ENCODE measurements at regions of chr10 and their contacts with region 1.

Region 1: DNA sequence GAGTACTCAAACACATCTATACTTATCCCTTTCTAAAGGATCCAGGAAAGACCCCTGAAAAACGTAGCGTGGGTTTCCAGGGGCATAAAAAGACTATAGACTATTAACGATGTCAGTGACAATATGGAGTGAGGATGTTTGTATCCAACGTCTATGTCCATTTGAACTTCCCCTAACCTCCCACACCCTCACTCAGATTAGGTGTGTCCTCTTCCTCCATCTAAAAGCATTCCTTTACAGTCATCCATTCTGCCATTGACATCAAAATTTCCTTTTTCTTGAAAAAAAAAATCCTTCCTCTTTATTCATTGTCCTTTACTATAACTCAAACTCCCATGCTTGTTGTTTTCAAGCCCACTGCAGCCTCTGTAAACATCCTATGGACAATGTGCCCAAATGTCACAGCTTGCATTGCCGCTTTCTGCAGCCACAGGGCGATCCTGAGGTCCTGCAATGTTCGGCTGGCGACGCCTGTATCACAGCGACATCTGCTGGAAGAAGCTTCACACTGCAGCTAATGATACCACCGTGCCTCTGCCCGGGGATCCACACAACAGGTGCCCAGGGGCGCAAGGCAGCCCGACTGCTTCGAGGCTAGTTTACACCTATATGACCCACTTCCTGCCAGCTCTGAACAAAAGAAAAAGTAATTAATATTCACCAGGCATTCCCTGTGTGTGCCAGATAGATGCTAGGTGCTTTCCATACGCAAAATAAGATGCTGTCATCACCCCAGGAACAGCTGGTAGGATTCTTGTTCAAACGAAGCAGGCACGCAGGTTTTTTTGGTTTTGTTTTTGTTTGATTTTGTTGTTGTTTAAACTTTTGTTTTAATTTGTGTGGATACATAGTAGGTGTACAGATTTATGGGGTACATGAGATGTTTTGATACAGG is 267.9 kb upstream of the GHITM start:
- DNase-seq: peak; percentile 55 to 62
- ATAC-seq: peak; percentile 80 to 93 (median 88)
- H3K4me3 ChIP-seq: no peak overlapping the region
- H3K27ac ChIP-seq: no peak overlapping the region
- H3K4me1 ChIP-seq: peaks cover 0 to 13% (median 6%) of the 10 kb centered on the region in 9 donors
- H3K27me3 ChIP-seq: no peaks in the 10 kb centered on the region
- CTCF ChIP-seq: peak; percentile 89 to 99 (median 97)

Region 2: DNA sequence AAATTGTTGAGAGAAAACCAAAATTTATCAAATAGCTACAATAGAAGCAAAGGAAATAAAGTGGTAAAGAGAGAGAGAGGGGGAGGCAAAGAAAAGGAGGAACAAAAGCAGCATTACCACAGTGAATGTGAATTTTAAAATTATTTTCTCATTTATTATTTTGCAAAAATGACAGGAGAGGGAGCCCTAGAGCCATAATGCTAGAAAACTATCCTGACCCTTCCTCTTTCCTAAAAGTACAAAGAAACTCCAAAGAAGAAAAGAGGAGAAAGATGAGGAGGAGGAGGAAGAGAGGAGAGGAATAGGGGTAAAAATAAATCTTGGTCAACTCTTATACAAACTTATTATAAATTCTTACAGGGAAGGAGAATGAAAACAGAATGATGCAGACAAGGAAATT is 1074.9 kb before region 1 on chr10:
- intact Hi-C with region 1: loop called in 7 of 10 experiments (anchors 5 to 10 kb)
- DNase-seq: no peak
- ATAC-seq: no peak
- H3K4me3 ChIP-seq: no peak overlapping the region
- H3K27ac ChIP-seq: no peak overlapping the region
- H3K4me1 ChIP-seq: peaks cover 0 to 5% (median 0%) of the 10 kb centered on the region in 9 donors
- H3K27me3 ChIP-seq: no peaks in the 10 kb centered on the region
- CTCF ChIP-seq: peak in 8 of 9 donors; percentile 22 to 62 (median 44)

Measured in heart right ventricle (tissue), 16 donors.